Aorta (tissue), 5 donors: ENCODE measurements at regions of chrX and their contacts with region 1.

Region 1: DNA sequence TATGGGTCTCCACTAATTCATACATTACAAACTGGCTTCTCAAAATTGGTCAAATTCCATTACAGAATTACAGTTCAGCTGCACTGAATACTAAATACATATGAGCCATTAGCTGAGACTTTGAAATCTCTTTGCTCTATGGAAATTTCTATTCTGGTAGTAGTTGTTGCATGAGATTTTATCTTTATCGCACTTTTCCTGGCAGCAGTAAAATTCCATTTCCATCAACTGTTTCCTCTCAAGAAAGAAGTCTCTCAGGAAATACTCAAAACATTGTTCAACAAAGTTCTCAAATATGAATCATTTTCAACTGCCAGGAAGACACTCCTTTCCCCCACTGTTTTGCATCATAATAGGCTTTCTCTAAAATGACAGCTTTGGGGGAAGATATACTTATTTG is 51.3 kb downstream of the ATP11C start:
- DNase-seq: no peak
- ATAC-seq: no peak
- H3K4me3 ChIP-seq: no peak overlapping the region
- H3K27ac ChIP-seq: no peak overlapping the region
- H3K4me1 ChIP-seq: no peaks in the 10 kb centered on the region
- H3K27me3 ChIP-seq: no peaks in the 10 kb centered on the region

Region 2: DNA sequence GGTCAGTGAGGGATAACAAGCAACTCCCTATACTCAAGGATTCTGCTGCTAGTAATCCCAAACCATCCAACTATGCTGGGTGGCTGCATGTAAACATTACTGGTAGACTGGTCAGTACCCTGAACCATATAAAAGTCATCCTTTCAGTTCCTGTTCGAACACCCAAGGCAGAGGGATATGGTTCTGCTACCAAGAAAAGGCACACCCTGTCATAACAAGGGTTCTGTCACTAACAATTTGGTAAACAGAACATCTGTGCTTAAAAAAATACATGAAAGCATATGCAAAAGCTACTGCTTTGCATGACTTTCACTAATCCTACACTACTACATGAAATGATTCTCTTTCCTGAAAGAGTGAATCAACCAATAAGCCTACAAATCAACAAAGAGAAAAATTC is 96.8 kb before region 1 on chrX:
- intact Hi-C with region 1: no loop called
- DNase-seq: no peak
- ATAC-seq: no peak
- H3K4me3 ChIP-seq: no peak overlapping the region
- H3K27ac ChIP-seq: no peak overlapping the region
- H3K4me1 ChIP-seq: no peaks in the 10 kb centered on the region
- H3K27me3 ChIP-seq: no peaks in the 10 kb centered on the region

Region 3: DNA sequence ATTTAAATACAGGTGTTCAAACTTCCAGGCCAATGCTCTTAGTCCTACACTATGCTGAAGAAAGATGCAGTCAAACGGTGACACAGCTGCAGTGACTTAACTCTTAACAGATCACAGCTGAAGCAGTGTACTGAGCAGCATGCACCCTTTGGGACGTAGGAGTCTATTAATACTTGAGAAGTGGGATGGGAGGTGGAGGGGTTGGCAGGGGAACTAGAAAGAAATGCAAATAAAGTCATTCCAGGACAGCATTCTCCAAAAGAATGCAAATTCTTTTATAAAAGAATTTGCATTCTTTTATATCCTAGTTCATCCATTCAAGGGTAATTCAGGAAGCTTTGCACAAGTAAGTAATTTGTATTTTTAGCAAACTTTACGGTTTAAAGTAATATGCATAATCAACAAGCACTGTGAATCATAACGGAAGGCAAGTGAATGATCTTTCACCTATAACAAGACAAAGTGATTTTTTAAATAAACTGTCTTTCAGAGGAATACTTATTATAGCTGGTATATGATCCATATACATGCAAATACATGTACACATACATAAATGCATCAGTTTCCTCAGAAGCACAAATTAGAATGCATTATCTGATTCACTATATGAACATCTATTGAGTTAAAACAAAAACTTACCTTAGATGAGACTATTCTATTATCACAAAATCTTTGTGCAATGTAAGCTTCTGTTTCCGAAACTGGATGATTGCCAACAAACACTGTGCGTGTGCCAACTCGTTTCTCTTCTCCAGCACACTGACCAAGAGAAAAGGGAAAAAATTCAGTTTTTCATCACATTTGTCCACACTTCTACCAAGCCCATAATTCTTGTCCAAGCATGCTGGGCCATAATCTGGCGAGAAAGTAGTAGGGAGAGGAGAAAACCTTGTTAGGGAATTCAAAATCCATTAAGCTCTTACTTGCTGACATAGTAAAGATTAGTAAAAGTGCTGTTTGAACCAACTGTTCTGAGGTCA is 55.2 kb before region 1 on chrX:
- intact Hi-C with region 1: loop called in 1 of 2 experiments (anchors 10 kb)
- DNase-seq: no peak
- ATAC-seq: no peak
- H3K4me3 ChIP-seq: no peak overlapping the region
- H3K27ac ChIP-seq: no peak overlapping the region
- H3K4me1 ChIP-seq: peaks cover 0 to 2% of the 10 kb centered on the region in 2 donors
- H3K27me3 ChIP-seq: no peaks in the 10 kb centered on the region

Region 4: GRCh38 chrX:139932901-139933796 is 51.6 kb after region 1 on chrX and contains the start of gene ATP11C:
- intact Hi-C with region 1: loop called in 1 of 2 experiments (anchors 5 kb)
- DNase-seq: peak; percentile 88 to 93
- ATAC-seq: peak; percentile 95
- H3K4me3 ChIP-seq: peak within 1 kb of the TSS; percentile 62 to 77
- H3K27ac ChIP-seq: peak within 1 kb of the TSS; percentile 10 to 97
- H3K4me1 ChIP-seq: peaks cover 0 to 3% of the 10 kb centered on the region in 2 donors
- H3K27me3 ChIP-seq: no peaks in the 10 kb centered on the region
- total RNA-seq, gene ATP11C: 30.2 to 32.1 TPM